IMR-90 (cell line): ENCODE measurements at regions of chr6 and their contacts with region 1.

Region 1: DNA sequence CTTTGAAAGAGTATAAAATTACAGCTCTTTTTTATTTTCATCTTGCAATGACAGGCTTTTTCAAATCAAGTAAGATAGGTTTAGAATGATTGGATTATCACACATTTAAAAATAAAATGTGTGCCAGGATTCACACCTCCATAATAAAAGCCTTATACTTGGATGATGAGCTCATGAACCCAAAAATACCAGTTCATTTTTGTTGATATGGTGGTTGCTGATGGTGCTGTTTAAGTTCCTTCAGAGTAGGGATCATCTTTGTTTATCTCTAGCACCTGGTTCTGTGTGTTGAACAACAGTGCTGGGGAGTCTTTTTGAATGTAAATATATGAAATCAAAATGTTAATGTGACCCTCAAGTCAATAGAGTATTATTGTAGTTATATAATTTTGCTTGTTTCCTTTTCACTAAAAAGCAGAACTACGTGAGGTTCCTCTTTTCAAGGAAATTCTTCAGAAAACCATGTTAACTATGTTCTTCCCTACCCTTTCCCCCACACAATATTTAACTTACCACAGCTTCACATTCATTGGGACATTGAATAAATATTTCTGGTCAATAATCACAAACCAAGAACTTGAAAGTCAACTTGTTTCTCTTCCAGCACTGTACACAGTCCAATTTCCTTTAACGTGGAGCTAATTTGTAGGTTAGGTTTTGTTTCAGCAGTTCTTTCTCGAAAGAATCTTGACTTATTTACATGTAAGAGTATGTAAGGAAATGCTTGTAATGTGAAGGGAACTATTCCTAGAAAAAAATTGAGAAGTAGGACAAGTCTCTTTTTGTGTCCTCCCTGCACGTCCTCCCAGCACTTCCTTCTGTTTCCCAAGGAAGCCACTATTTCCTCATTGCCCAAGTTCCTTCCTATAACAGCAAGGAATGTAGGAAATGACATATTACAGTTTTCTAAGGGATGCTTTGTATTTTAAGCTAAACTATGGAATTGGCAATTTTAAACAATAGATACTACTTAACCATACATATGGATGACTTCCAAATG is 945.9 kb upstream of the CITED2 start:
- DNase-seq: peak; percentile 8
- ATAC-seq: peak; percentile 30; the same call in 1 of the 2 replicates
- H3K4me3 ChIP-seq: no peak overlapping the region
- H3K27ac ChIP-seq: no peak overlapping the region
- H3K4me1 ChIP-seq: peaks cover 7% of the 10 kb centered on the region
- H3K27me3 ChIP-seq: no peaks in the 10 kb centered on the region
- CTCF ChIP-seq: no peak
- POLR2A ChIP-seq: no peak
- RAD21 ChIP-seq: no peak

Region 2: DNA sequence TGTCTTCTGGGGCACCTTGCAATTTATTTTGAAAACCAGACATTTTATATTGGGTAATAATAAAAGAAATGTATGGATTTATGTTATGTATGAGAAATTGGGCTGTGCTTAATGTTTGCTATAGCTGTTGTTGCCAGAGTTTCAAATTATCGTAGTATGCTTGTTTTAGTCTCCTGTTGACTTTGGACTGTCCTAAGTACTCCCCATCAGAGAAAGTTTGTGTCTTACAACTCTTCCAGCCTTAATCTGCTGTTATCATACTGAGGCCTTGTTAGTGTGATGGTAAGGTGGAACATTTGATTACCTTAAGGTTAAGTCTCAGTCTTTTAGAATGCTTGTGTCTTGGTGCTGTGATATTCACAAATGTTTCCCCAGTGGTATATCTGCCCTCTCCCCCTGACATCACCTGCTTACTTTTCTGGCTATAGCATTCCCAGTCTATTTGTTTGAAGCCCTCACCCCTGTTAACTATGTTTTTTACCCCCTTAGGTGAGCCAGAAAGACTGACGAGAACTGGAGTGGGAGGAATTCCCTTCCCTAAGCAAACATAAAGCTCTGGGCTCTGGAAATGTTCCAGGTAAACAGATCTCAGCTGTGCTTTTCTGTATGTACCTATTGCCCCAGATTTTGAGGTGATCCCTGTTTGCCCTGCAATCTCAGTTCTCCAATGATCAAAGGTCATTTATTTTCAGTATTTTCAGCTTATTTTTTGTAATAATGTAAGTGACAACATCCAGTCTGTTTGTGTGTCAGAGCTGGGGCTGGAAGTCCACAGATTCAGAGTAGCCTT is 364.8 kb before region 1 on chr6:
- CTCF ChIA-PET with region 1: interaction called, 3 read pairs
- POLR2A ChIA-PET with region 1: interaction called, 17 read pairs
- dilution Hi-C with region 1: no loop called
- in situ Hi-C with region 1: no loop called
- intact Hi-C with region 1: no loop called
- DNase-seq: no peak
- ATAC-seq: no peak
- H3K4me3 ChIP-seq: no peak overlapping the region
- H3K27ac ChIP-seq: no peak overlapping the region
- H3K4me1 ChIP-seq: no peaks in the 10 kb centered on the region
- H3K27me3 ChIP-seq: no peaks in the 10 kb centered on the region
- CTCF ChIP-seq: no peak
- POLR2A ChIP-seq: no peak
- RAD21 ChIP-seq: no peak